Gastrocnemius medialis (tissue), 4 donors: ENCODE measurements at regions of chr2 and their contacts with region 1.

Region 1: DNA sequence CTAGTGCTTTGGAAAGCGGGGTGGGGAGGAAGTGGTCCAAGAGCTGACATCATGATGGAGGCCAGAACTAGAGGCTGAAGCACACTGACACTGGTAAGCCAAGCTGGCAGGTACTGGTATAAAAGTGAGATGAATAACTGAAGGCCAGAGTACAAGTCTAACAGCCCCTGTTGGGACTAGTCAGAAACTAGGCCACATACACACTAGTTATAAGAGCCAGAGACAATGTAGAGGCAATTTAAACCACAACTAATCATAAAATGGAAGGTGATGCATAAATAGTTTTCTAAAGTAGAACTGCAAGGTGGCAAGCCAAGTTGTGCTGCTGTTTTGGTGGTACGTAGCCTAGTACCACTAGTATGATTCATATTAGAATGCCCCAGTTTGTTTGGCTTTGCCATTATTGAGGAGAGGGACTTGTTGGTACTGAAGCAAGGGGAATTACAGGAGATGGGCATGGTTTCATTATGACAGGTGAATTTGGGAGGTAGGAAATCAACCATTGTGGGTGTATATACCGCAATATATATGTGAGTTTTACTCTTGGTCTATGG is 57.6 kb downstream of the GDF7 start:
- DNase-seq: no peak
- ATAC-seq: no peak
- H3K4me3 ChIP-seq: no peak overlapping the region
- H3K27ac ChIP-seq: no peak overlapping the region
- H3K4me1 ChIP-seq: no peaks in the 10 kb centered on the region
- H3K27me3 ChIP-seq: no peaks in the 10 kb centered on the region
- CTCF ChIP-seq: no peak
- POLR2A ChIP-seq: no peak

Region 2: DNA sequence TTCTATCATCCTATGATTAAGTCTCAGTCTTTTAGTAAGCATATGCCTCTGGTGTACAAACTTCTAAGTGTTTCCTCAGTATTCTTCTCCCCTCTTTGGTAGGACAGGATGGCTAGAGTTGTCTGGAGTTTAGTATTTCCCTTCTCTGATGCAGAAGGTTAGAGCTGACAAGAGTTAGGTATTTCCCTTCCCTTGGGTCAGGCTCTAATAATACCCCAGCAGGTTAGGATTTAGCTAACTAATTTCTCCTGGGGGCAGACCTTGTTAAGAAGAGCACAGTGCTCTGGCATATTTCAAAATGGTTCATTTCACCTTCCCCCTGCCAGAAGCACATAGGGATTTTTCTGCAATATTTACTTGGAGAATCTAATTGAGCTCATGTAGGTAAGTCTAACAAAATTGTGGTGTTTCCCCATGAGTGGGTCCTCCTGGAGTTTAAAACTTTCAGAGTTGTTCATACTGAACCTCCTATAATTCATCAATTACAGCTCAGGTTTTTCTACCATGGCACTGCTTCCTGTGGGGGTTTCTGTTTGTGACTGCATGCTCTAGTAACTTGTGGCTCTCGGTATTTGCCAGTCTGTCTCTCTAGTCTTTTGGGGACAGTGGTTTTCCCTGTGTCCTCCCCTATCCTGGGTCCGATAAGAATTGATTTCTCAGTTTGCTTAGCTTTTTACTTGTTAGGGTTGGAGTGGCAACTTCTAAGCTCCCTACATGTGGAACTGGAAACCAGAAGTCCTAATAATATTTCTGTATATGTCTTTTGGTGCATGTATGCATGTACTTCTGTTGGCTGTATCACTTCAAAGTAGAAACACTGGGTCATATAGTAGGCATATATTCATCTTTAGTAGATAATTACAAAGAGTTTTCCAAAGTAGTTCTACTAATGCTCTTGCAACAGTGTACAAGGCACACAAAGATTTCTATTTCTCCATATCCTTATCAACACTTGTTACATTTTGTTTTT is 20.1 kb after region 1 on chr2:
- in situ Hi-C with region 1: no loop called
- intact Hi-C with region 1: loop called (anchors 1 kb)
- DNase-seq: no peak
- ATAC-seq: no peak
- H3K4me3 ChIP-seq: no peak overlapping the region
- H3K27ac ChIP-seq: no peak overlapping the region
- H3K4me1 ChIP-seq: no peaks in the 10 kb centered on the region
- H3K27me3 ChIP-seq: no peaks in the 10 kb centered on the region
- CTCF ChIP-seq: no peak
- POLR2A ChIP-seq: no peak